MCF 10A (cell line): ENCODE measurements at regions of chr16 and their contacts with region 1.

Region 1: DNA sequence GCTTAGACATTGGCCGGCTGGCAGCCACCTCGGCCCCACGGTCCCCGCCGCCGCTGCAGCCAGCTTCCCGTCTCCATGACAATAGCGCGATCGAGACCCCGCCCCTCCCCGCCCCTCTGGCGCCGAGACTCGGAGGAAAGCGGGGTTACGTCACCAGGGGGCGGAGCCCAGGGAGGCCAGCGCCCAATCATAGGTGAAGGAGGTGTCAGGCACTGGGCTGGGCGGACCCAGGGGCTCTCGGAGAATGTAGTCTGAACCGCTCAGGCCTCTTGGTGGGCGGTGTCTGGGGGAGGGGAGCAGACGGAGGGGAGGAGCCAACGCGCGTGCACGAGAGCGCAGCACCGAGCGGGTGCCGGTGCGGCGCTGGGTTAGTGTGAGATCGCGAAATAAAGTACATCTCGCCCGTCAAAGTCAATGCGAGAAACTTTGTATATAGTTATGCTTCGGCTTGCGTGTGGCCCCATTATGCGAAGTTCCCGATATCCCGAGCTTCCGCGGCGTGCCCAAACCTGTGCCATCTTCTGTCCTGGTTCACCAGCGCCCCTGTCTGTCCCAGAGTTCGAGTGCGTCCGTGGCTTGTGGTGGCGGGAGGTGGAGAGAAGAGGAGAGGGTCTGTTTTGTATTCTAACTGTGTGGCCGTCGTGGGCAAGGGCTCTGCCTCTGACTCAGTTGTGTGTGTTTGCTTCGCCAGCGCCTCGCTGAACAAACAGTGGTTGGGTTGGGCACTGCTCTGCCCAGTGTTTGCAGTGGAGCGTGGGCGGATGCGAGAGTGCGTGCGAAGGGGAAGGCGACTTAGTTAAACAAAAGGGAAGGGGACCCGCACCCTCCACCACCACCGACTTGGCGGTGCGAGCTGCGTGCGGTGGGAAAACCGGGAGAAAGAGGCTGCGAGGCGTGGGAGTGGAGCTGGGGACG is 1.3 kb upstream of the IRX5 start:
- DNase-seq: peak; percentile 99
- H3K4me3 Mint-ChIP-seq: peak overlapping the region; percentile 88
- H3K27ac Mint-ChIP-seq: peak overlapping the region; percentile 97
- H3K4me1 Mint-ChIP-seq: peaks cover 21% of the 10 kb centered on the region
- H3K27me3 Mint-ChIP-seq: no peaks in the 10 kb centered on the region
- CTCF ChIP-seq: peak; percentile 17

Region 2: DNA sequence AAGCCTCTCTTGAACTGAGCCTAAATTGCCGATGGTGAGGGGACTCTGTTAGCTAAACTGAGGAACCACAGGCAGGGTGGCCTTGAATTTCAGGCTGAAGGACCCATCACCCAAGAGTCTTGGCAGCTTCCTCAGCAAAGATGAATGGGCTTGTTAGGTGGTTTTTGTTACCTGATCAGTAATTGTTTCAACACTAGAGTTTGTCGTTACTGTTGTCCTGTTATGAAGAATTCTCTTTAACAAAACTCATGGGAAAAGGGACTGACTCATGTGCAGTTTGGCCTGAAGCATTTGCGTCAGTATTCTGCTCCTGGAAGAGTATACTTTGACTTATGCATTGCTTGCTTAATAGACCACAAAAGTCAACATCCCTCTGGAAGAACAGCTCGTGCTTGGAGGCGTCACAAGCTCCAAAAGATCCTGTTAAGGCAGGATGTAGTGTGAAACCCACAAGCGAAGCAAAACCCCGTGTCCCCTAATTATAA is 848.8 kb before region 1 on chr16:
- CTCF ChIA-PET with region 1: no interaction called
- POLR2A ChIA-PET with region 1: interaction called, 22 read pairs
- intact Hi-C with region 1: loop called (anchors 5 kb)
- DNase-seq: peak; percentile 99
- H3K4me3 Mint-ChIP-seq: peak overlapping the region; percentile 54
- H3K27ac Mint-ChIP-seq: peak overlapping the region; percentile 99
- H3K4me1 Mint-ChIP-seq: peaks cover 41% of the 10 kb centered on the region
- H3K27me3 Mint-ChIP-seq: no peaks in the 10 kb centered on the region
- CTCF ChIP-seq: no peak

Region 3: GRCh38 chr16:54425681-54426552 is 503.4 kb before region 1 on chr16:
- CTCF ChIA-PET with region 1: interaction called, 4 read pairs
- POLR2A ChIA-PET with region 1: interaction called, 29 read pairs
- intact Hi-C with region 1: no loop called
- DNase-seq: no peak
- H3K4me3 Mint-ChIP-seq: peak overlapping the region; percentile 7
- H3K27ac Mint-ChIP-seq: no peak overlapping the region
- H3K4me1 Mint-ChIP-seq: peaks cover 45% of the 10 kb centered on the region
- H3K27me3 Mint-ChIP-seq: no peaks in the 10 kb centered on the region
- CTCF ChIP-seq: no peak

Region 4: DNA sequence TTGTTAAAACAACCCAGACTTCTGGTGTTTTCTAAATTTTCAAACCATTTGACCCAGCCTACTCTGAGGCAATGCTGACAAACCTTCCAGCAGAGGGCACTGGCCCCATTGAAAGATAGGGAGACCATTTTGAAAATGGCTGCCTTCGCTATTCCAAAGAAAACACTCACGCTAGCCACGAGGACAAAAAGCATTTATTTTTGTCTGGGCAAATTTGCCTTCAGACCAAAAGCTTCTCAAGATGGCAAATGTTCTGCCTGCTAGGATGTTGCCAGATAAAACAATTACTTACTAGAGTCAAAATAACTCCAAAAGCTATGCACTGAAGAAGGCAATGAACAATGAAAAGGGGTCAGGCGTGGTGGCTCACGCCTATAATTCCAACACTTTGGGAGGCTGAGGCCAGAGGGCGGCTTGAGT is 295.4 kb before region 1 on chr16:
- CTCF ChIA-PET with region 1: interaction called, 6 read pairs
- POLR2A ChIA-PET with region 1: interaction called, 7 read pairs
- intact Hi-C with region 1: loop called (anchors 1 kb)
- DNase-seq: peak; percentile 78
- H3K4me3 Mint-ChIP-seq: no peak overlapping the region
- H3K27ac Mint-ChIP-seq: no peak overlapping the region
- H3K4me1 Mint-ChIP-seq: peaks cover 8% of the 10 kb centered on the region
- H3K27me3 Mint-ChIP-seq: no peaks in the 10 kb centered on the region
- CTCF ChIP-seq: peak; percentile 76

Region 5: DNA sequence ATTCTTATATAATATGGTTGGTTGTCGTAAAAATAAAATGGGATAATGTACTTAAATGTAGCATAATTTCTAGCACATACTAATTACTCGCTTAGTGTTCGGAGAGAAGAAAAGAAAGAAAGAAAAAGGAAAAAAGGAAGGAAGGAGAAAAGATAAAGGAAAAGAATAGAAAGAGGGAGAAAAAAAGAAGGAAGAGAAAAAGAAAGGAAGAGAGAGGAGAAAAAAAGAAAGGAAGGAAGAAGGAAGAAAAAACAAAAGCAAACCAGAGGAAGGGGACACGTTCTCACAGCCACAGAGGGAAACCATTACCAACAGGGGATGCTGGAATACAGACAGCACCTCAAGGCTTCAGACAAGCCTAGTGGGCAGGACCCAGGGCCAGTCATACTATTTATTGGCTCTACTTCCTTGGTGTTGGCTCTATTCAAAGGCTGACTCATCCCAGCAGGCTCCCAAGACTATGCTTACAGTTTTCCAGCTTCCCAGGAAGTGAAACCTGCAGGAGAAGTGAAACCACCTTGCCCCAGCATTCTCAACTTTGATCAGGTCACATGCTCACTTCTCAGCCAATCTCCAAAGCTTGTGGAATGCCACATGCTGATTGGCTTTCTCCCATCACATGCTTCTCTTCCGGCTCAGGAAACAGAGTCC is 272.2 kb before region 1 on chr16:
- CTCF ChIA-PET with region 1: interaction called, 3 read pairs
- POLR2A ChIA-PET with region 1: interaction called, 190 read pairs
- intact Hi-C with region 1: no loop called
- DNase-seq: peak; percentile 98
- H3K4me3 Mint-ChIP-seq: peak overlapping the region; percentile 63
- H3K27ac Mint-ChIP-seq: peak overlapping the region; percentile 73
- H3K4me1 Mint-ChIP-seq: peaks cover 38% of the 10 kb centered on the region
- H3K27me3 Mint-ChIP-seq: no peaks in the 10 kb centered on the region
- CTCF ChIP-seq: no peak

Region 6: GRCh38 chr16:54846766-54847165 is 82.6 kb before region 1 on chr16:
- CTCF ChIA-PET with region 1: interaction called, 5 read pairs
- POLR2A ChIA-PET with region 1: interaction called, 42 read pairs
- intact Hi-C with region 1: loop called (anchors 2 kb)
- DNase-seq: peak; percentile 81
- H3K4me3 Mint-ChIP-seq: peak overlapping the region; percentile 51
- H3K27ac Mint-ChIP-seq: peak overlapping the region; percentile 94
- H3K4me1 Mint-ChIP-seq: peaks cover 22% of the 10 kb centered on the region
- H3K27me3 Mint-ChIP-seq: no peaks in the 10 kb centered on the region
- CTCF ChIP-seq: no peak

Region 7: DNA sequence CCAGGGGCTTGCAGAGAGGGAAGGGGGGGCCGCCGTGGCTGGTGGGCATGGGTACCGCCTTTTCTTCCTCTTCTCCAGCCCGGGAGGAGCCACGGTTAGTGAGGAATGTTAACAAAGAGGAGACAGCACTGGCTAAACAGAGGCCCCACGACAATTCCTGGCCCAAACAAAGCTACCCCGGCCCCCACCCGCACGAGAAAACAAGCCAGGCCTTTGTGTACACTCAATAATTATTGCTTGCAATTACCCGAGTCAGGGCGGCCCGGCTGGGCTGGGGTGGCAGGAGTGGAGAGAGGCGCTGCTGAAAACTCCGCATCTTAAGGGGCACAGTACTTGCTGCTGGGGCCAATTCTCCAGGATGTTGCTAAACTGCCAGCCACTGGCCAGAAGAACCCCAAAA is 57.7 kb after region 1 on chr16:
- CTCF ChIA-PET with region 1: no interaction called
- POLR2A ChIA-PET with region 1: no interaction called
- intact Hi-C with region 1: no loop called
- DNase-seq: no peak
- H3K4me3 Mint-ChIP-seq: no peak overlapping the region
- H3K27ac Mint-ChIP-seq: no peak overlapping the region
- H3K4me1 Mint-ChIP-seq: no peaks in the 10 kb centered on the region
- H3K27me3 Mint-ChIP-seq: no peaks in the 10 kb centered on the region
- CTCF ChIP-seq: no peak

Region 8: GRCh38 chr16:55543472-55543871 is 614.1 kb after region 1 on chr16:
- CTCF ChIA-PET with region 1: no interaction called
- POLR2A ChIA-PET with region 1: no interaction called
- intact Hi-C with region 1: loop called (anchors 10 kb)
- DNase-seq: peak; percentile 49
- H3K4me3 Mint-ChIP-seq: no peak overlapping the region
- H3K27ac Mint-ChIP-seq: no peak overlapping the region
- H3K4me1 Mint-ChIP-seq: no peaks in the 10 kb centered on the region
- H3K27me3 Mint-ChIP-seq: no peaks in the 10 kb centered on the region
- CTCF ChIP-seq: peak; percentile 23